H1 (cell line): ENCODE measurements at regions of chr5 and their contacts with region 1.

Region 1: GRCh38 chr5:172479044-172479783 is 24.9 kb upstream of the SH3PXD2B start:
- DNase-seq: peak; percentile 75 to 78
- H3K4me3 ChIP-seq: no peak overlapping the region
- H3K27ac ChIP-seq: no peak overlapping the region
- H3K4me1 ChIP-seq: peaks cover 0 to 4% (median 2%) of the 10 kb centered on the region in 4 experiments; a peak in 2 of 7 replicates
- H3K27me3 ChIP-seq: peaks cover 0 to 2% (median 0%) of the 10 kb centered on the region in 4 experiments; a peak in 1 of 7 replicates
- CTCF ChIP-seq: peak; percentile 83 to 99 (median 85)
- EP300 ChIP-seq: no peak
- POLR2A ChIP-seq: no peak
- RAD21 ChIP-seq: peak; percentile 88 to 95

Region 2: DNA sequence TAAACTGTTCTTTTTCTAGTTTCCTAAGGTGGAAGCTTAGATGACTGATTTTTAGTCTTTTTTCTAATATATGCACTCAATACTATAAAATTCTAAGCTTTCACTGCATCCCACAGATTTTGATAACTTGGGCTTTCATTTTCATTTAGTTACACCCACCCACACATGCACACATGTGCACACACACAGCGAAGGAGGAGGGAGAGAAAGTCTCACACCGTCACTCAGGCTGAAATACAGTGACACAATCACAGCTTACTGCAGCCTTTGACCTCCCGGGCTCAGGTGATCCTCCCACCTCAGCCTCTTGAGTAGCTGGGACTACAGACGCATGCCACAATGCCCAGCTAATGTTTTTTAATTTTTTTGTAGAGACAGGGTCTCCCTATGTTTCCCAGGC is 597.1 kb before region 1 on chr5:
- CTCF ChIA-PET with region 1: no interaction called
- POLR2A ChIA-PET with region 1: no interaction called
- DNase-seq: no peak
- H3K4me3 ChIP-seq: no peak overlapping the region
- H3K27ac ChIP-seq: no peak overlapping the region
- H3K4me1 ChIP-seq: no peaks in the 10 kb centered on the region
- H3K27me3 ChIP-seq: no peaks in the 10 kb centered on the region
- CTCF ChIP-seq: no peak
- EP300 ChIP-seq: no peak
- POLR2A ChIP-seq: no peak
- RAD21 ChIP-seq: no peak

Region 3: DNA sequence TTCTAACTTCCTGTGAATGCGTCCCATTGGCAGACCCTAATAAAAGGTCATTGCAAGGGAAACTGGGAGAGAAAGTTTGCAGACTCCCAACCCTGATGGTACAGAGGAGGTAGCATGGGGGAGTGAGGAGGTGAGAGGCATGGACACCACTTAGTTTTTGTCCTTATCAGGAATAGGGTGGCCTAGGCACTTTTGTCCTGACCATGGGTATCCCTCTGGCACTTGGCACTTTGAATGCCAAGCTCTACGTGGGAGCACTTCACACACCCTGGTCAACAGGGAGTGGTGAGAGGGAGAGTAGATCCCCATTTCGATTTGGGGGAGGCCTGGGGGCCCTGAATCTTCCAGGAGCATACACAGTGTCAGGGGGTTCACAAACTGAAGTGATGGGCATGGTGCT is 50.7 kb after region 1 on chr5:
- CTCF ChIA-PET with region 1: no interaction called
- POLR2A ChIA-PET with region 1: no interaction called
- DNase-seq: peak in 1 of 2 experiments; percentile 26
- H3K4me3 ChIP-seq: no peak overlapping the region
- H3K27ac ChIP-seq: no peak overlapping the region
- H3K4me1 ChIP-seq: no peaks in the 10 kb centered on the region
- H3K27me3 ChIP-seq: peaks cover 0 to 5% (median under 1%) of the 10 kb centered on the region in 4 experiments; a peak in 2 of 7 replicates
- CTCF ChIP-seq: no peak
- EP300 ChIP-seq: no peak
- POLR2A ChIP-seq: no peak
- RAD21 ChIP-seq: no peak

Region 4: DNA sequence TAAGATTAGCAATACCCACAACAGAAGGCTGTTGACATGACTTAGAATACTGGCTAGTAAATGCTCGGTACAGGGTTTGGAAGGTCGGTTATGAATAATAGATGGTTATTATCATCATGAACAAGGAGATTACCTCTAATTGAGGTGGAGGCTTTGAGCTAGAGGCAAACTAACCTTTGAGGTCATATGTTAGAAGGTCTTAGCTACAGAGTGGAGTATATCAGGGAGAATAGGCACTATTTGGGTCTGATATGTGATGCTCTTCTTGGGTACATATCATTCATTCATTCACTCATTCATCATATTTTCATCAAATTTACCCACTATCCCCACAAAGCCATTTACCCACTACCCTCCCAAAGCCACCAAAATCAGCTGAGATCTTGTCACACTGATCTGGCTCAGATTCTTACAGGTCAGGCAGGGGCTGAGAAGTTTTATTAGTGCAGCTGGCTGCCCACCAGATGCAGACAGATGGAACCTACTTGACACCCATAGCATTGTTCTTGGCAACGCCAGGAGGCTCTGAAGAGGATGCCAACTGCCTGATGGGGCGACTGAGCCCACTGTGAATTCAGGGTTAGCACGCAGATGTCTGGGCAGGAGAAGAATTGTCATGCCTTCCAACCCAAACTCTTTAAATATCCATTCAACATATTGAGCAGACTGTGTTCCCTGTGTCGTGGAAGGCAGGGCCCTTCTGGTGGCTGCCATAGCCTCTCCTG is 65.3 kb after region 1 on chr5:
- CTCF ChIA-PET with region 1: interaction called, 10 read pairs
- POLR2A ChIA-PET with region 1: no interaction called
- DNase-seq: no peak
- H3K4me3 ChIP-seq: no peak overlapping the region
- H3K27ac ChIP-seq: no peak overlapping the region
- H3K4me1 ChIP-seq: peaks cover 0 to 8% (median 2%) of the 10 kb centered on the region in 4 experiments; a peak in 4 of 7 replicates
- H3K27me3 ChIP-seq: peaks cover 0 to 2% (median 0%) of the 10 kb centered on the region in 4 experiments; a peak in 3 of 7 replicates
- CTCF ChIP-seq: no peak
- EP300 ChIP-seq: no peak
- POLR2A ChIP-seq: no peak
- RAD21 ChIP-seq: no peak

Region 5: DNA sequence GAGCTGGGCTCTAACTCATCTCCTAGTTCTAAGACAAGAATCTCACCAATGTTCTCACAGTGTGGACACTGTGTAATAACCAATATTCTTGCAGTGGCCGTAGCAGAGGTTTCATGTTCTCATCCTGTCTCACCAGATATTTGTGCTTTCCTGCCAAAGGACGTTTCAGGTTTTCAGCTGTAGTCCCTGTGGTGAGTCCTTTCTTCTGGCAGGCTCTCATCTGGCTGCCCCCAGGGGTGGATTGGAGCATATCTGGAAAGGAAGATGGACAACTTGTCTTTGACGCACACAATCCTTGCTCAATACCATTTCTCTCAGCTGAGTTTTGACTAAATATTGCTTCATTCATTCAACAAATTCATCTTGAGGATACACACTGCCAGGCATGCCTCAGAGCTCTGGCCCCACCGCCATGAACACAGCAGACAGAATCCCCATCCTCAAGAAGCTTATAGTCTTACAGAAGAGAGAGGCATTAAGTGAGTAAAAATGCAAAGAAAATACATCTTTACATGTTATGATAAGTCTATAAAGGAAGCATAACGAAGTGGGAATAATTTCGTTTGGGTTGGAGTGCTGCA is 128.1 kb after region 1 on chr5:
- CTCF ChIA-PET with region 1: interaction called, 10 read pairs
- POLR2A ChIA-PET with region 1: no interaction called
- DNase-seq: no peak
- H3K4me3 ChIP-seq: no peak overlapping the region
- H3K27ac ChIP-seq: no peak overlapping the region
- H3K4me1 ChIP-seq: peaks cover 0 to 12% (median 4%) of the 10 kb centered on the region in 4 experiments; a peak in 4 of 7 replicates
- H3K27me3 ChIP-seq: no peaks in the 10 kb centered on the region; a peak in 1 of 7 replicates
- CTCF ChIP-seq: no peak
- EP300 ChIP-seq: no peak
- POLR2A ChIP-seq: no peak
- RAD21 ChIP-seq: no peak

Region 6: DNA sequence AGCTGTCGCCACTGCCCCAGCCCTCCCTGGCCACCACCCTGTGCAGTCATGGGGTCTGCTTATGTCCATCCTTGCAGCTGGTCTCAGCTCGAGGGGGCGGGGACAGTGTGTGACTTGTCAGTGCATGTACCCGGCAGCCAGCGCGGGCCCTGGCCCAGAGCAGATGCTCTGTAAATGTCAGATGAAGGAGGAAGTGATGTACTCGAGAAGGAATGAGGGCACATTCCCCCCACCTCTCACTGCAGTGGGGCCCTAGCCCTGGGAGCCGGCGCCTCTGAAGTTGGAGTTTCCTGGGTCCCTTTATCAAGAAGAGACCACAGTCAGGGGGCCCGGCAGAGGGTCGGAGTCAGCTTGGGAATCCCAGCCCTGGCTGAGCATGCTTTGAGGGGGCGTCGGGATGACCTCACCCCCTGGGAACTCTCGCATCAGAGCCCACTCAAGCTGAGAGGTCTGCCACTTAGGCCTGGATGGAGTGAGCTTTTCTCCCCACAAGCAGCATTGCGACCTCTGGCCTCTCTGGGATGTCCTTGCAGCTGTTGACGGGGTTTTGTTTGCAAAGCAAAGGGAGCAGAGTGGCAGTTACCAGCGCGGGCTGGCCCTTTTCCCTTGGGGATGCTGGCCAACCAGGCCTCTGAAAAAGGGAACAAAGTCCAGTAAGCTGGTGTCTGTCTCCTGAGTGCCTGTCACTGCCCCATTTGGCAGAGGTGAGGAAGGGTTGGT is 180.9 kb after region 1 on chr5:
- CTCF ChIA-PET with region 1: interaction called, 11 read pairs
- POLR2A ChIA-PET with region 1: no interaction called
- DNase-seq: no peak
- H3K4me3 ChIP-seq: no peak overlapping the region
- H3K27ac ChIP-seq: no peak overlapping the region; the same call in 1 of the 2 replicates
- H3K4me1 ChIP-seq: peaks cover 0 to 2% (median 0%) of the 10 kb centered on the region in 4 experiments; a peak in 2 of 7 replicates
- H3K27me3 ChIP-seq: no peaks in the 10 kb centered on the region
- CTCF ChIP-seq: peak in 2 of 3 experiments; percentile 2 to 6; a peak in 2 of 4 replicates
- EP300 ChIP-seq: no peak
- POLR2A ChIP-seq: no peak
- RAD21 ChIP-seq: peak; percentile 9 to 22; a peak in 2 of 4 replicates

Region 7: DNA sequence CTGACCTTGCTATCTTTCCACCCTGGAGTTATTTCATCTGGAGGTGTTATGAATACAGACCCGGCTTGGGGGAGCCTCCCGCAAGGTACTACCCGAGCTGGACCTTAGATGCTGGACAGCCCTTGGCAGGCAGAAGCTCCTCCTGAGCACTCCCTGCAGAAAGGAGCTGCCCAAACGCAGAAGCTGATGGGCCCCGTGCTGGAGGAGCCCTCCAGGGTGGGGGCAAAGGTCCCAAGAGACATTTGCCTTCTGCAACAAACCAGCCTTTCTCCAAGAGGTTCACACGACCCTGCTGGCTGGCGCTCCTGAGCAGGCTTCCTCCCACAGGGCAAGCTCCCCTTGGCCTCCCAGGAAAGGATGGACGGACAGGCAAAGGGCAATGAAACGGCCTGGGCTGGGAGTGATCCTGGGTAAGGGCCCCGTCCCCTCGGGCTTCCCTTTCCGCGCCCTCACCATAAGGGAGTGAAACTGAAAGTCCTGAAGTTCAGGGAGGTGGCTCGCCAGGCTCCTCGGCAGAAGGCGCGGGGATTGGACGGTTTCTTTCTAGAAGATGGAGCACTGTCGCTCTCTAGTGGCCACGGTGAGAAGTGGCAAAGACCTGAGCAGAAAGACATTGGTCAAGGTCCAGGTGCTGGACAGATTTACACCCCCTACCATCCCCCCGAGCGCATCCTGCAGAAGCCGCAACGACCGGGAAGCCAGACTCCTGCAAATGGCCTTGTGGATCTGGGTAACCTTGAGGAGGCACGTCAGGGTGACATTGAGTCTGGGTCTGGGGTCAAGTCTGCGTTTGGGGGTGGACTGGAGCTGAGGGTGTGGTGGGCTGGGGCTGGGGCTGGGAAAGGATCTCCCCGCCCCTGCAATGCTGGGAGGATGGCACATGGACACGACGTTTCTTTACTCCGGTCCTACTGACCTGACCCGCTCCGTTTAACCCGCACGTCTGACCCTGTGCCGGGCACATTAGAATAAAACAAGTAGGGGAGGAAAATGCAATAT is 218.2 kb after region 1 on chr5:
- CTCF ChIA-PET with region 1: interaction called, 170 read pairs
- POLR2A ChIA-PET with region 1: no interaction called
- DNase-seq: peak in 1 of 2 experiments; percentile 91
- H3K4me3 ChIP-seq: peak overlapping the region in 3 of 4 experiments; percentile 19 to 50 (median 35); a peak in 4 of 8 replicates
- H3K27ac ChIP-seq: no peak overlapping the region
- H3K4me1 ChIP-seq: peaks cover 7 to 25% (median 15%) of the 10 kb centered on the region in 4 experiments
- H3K27me3 ChIP-seq: peaks cover 0 to 11% (median 1%) of the 10 kb centered on the region in 4 experiments; a peak in 4 of 7 replicates
- CTCF ChIP-seq: peak; percentile 75 to 94 (median 91)
- EP300 ChIP-seq: no peak
- POLR2A ChIP-seq: no peak
- RAD21 ChIP-seq: peak; percentile 96 to 98